Aorta (tissue), 5 donors: ENCODE measurements at regions of chr9 and their contacts with region 1.

Region 1: DNA sequence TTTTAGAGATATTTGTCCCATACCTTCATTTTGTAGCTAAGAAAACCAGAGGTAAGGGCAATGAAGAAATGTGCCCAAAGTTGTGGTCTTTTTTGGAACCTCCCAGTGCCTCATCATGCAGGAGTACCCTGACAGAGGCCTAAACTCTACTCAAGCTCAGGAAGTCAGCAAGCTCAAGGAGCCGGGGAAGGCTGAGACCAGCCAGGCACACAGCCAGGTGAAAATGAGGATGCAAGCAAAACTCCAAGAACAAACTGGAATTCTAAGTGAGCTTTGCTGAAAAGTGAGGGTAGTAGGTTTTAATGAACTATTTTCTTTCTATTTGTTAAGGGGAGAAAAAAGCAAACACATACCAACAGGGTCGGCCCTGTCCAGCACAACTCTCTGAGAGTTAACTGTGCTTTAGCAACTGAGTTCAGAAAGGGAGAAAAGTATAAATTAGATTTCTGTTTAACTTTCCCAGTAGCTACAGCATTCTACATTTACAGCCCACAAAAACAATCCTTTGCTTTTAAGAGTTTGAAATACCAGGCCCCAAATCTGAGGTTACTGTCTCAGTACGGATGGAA is 146.4 kb downstream of the GNAQ start:
- DNase-seq: peak in 1 of 2 donors; percentile 51
- ATAC-seq: no peak
- H3K4me3 ChIP-seq: no peak overlapping the region
- H3K27ac ChIP-seq: peak overlapping the region; percentile 49 to 87
- H3K4me1 ChIP-seq: peaks cover 2 to 16% of the 10 kb centered on the region in 2 donors
- H3K27me3 ChIP-seq: no peaks in the 10 kb centered on the region

Region 2: DNA sequence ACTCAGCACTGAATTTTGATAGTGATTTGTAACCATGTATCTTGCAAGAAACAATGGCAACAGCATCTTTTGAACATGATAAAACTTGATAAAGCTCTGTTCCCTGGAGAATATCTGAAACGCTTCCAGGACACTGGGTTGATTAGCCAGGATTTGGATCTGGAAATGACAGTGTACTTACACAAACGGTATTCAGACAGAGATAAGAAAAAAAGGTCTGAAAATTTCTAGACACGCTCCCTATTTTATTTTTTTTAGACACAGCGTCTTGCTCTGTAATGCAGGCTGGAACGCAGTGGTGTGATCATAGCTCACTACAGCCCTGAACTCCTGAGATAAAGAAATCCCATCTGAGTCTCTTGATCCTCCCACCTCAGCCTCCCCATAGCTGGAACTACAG is 37.4 kb after region 1 on chr9:
- intact Hi-C with region 1: loop called in 1 of 2 experiments (anchors 5 kb)
- DNase-seq: no peak
- ATAC-seq: no peak
- H3K4me3 ChIP-seq: no peak overlapping the region
- H3K27ac ChIP-seq: no peak overlapping the region
- H3K4me1 ChIP-seq: peaks cover under 1 to 5% of the 10 kb centered on the region in 2 donors
- H3K27me3 ChIP-seq: no peaks in the 10 kb centered on the region